ENCODE measurements at regions of chr14 and their contacts with region 1.

Region 1: DNA sequence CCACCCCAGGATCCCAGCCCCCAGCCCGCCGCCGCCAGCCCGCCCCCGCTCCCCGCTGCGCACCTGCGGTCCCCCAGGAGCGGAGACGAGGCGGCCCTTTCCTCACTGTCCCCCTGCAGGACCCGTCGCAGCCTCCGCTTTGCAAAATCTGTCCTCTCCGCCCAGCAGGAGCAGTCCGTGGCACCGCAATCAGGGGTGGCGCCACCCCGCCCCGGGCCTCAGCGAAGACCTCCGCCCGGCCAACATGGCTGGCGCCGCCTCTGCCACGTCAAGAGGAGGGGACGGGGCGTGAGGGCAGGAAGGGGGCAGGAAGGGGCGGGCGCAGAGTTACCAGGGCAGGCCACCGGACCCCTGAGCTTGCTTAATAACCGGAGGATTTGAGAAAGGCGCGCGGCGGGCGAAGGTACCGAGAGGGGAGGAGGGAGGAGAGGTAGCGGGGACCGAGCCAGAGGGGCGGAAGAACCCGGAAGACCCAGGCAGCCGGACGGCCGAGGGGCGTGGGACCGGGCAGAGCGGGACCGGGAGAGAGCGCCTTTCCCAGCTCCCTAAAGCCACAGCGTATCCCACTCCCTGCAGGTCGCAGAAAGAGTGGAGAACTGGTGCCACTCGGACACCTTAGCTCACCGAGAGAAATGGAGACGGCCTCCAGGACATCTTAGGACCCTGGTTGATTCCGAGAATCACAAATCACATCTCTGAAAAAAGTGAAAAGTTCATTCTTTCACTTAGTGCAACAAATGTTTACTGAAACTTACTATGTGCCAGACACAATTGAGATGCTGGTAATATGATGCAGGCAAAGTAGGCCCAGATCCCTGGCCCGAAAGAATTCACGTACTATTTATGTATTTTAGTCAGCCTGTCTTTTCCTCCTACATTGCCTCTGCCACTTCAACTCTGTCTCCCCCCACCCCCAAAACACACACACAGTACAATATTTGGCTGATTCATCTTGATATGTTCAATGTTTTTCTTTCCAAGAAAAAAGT is at the start of gene SEC23A:
- DNase-seq: peak; percentile 94 to 97
- H3K4me3 ChIP-seq: peak within 1 kb of the TSS; percentile 76
- H3K4me3 Mint-ChIP-seq: peak within 1 kb of the TSS; percentile 87
- H3K27ac Mint-ChIP-seq: peak within 1 kb of the TSS; percentile 93
- H3K4me1 ChIP-seq: peaks cover 24% of the 10 kb centered on the region
- H3K4me1 Mint-ChIP-seq: peaks cover 7% of the 10 kb centered on the region
- H3K27me3 ChIP-seq: no peaks in the 10 kb centered on the region
- H3K27me3 Mint-ChIP-seq: no peaks in the 10 kb centered on the region
- CTCF ChIP-seq: no peak
- total RNA-seq, gene SEC23A: 90.2 and 108 TPM in 2 replicates

Region 2: GRCh38 chr14:39005044-39005880 is 98.0 kb before region 1 on chr14:
- CTCF ChIA-PET with region 1: no interaction called
- POLR2A ChIA-PET with region 1: no interaction called
- intact Hi-C with region 1: no loop called
- DNase-seq: no peak
- H3K4me3 ChIP-seq: no peak overlapping the region
- H3K4me3 Mint-ChIP-seq: no peak overlapping the region
- H3K27ac Mint-ChIP-seq: no peak overlapping the region
- H3K4me1 ChIP-seq: peaks cover 10% of the 10 kb centered on the region; the same call in 1 of the 2 replicates
- H3K4me1 Mint-ChIP-seq: peaks cover 6% of the 10 kb centered on the region
- H3K27me3 ChIP-seq: no peaks in the 10 kb centered on the region
- H3K27me3 Mint-ChIP-seq: no peaks in the 10 kb centered on the region
- CTCF ChIP-seq: no peak

Region 3: GRCh38 chr14:39114073-39114838 is 11.0 kb after region 1 on chr14 and contains the start of gene GEMIN2:
- CTCF ChIA-PET with region 1: no interaction called
- POLR2A ChIA-PET with region 1: interaction called, 23 read pairs
- intact Hi-C with region 1: loop called (anchors 1 kb)
- DNase-seq: peak; percentile 91 to 92
- H3K4me3 ChIP-seq: peak within 1 kb of the TSS; percentile 54
- H3K4me3 Mint-ChIP-seq: peak within 1 kb of the TSS; percentile 94
- H3K27ac Mint-ChIP-seq: peak within 1 kb of the TSS; percentile 79
- H3K4me1 ChIP-seq: no peaks in the 10 kb centered on the region
- H3K4me1 Mint-ChIP-seq: peaks cover 7% of the 10 kb centered on the region
- H3K27me3 ChIP-seq: no peaks in the 10 kb centered on the region
- H3K27me3 Mint-ChIP-seq: no peaks in the 10 kb centered on the region
- CTCF ChIP-seq: no peak
- total RNA-seq, gene GEMIN2: 26.3 and 31.4 TPM in 2 replicates

Region 4: DNA sequence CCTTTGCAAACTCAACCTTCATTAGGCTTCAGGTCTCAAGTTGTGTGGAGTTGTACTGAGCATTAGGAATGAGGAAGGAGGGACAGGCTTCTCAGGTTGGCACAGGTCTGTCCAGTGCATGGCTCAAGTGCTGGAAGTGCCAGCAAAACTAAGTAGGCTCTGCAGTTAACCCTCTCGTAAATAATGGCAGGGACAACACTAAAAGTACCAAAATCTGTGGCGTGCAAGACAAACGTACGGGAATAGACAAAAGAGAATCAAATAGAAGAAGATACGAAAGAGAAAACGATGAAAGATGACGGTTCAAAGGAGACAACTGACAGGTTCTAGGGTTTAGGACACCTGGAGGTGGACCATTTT is 66.3 kb after region 1 on chr14:
- CTCF ChIA-PET with region 1: interaction called, 9 read pairs
- POLR2A ChIA-PET with region 1: interaction called, 34 read pairs
- intact Hi-C with region 1: loop called (anchors 1 kb)
- DNase-seq: no peak
- H3K4me3 ChIP-seq: peak overlapping the region; percentile 97
- H3K4me3 Mint-ChIP-seq: peak overlapping the region; percentile 95
- H3K27ac Mint-ChIP-seq: peak overlapping the region; percentile 90
- H3K4me1 ChIP-seq: peaks cover 7% of the 10 kb centered on the region; the same call in 1 of the 2 replicates
- H3K4me1 Mint-ChIP-seq: peaks cover 17% of the 10 kb centered on the region
- H3K27me3 ChIP-seq: no peaks in the 10 kb centered on the region
- H3K27me3 Mint-ChIP-seq: no peaks in the 10 kb centered on the region
- CTCF ChIP-seq: no peak

Region 5: DNA sequence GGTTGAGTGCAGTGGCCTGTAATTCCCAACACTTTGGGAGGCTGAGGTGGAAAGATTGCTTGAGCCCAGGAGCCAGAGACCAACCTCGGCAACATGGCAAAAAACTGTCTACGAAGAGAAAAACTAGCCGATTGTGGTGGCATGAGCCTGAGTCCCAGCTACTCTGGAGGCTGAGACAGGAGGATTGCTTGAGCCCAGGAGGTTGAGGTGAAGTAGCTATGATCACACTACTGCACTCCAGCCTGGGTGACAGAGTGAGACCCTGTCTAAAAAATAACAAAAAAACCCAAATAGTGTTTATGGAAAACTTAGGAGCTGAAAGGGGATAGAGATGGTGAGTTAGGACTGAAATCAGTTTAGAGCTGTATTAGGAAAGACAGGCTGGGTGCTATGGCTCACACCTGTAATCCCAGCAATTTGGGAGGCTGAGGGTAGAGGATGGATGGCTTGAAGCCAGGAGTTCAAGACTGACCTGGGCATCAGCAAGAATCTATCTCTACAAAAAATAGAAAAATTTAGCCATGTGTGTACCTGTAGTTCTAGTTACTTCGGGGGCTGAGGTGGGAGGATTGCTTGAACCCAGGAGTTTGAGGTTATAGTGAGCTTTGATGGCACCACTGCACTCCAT is 81.5 kb after region 1 on chr14:
- CTCF ChIA-PET with region 1: no interaction called
- POLR2A ChIA-PET with region 1: interaction called, 10 read pairs
- intact Hi-C with region 1: no loop called
- DNase-seq: no peak
- H3K4me3 ChIP-seq: no peak overlapping the region
- H3K4me3 Mint-ChIP-seq: no peak overlapping the region
- H3K27ac Mint-ChIP-seq: peak overlapping the region; percentile 14
- H3K4me1 ChIP-seq: no peaks in the 10 kb centered on the region
- H3K4me1 Mint-ChIP-seq: no peaks in the 10 kb centered on the region
- H3K27me3 ChIP-seq: no peaks in the 10 kb centered on the region
- H3K27me3 Mint-ChIP-seq: no peaks in the 10 kb centered on the region
- CTCF ChIP-seq: no peak

Region 6: DNA sequence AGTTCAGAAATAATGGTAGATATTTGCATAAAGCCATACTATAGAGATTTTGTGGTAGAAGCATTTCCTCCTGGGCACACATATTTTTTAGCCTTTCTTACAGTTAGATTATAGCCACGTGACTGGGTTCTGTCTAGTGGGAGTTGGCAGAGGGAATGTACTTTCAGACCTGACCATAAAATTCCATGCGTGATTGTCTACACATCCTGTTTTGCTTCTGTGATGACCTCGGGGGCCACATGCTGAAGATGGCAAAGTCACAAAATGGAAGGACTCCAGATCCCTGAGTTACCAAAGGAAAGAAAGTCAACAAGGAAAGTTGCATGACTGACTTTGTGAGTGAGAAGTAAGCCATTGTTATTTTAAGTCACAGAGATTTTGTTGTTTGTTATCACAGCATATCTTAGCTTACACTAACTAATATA is 115.8 kb after region 1 on chr14:
- CTCF ChIA-PET with region 1: no interaction called
- POLR2A ChIA-PET with region 1: no interaction called
- intact Hi-C with region 1: no loop called
- DNase-seq: no peak
- H3K4me3 ChIP-seq: no peak overlapping the region
- H3K4me3 Mint-ChIP-seq: no peak overlapping the region
- H3K27ac Mint-ChIP-seq: no peak overlapping the region
- H3K4me1 ChIP-seq: peaks cover 7% of the 10 kb centered on the region
- H3K4me1 Mint-ChIP-seq: no peaks in the 10 kb centered on the region
- H3K27me3 ChIP-seq: no peaks in the 10 kb centered on the region
- H3K27me3 Mint-ChIP-seq: no peaks in the 10 kb centered on the region
- CTCF ChIP-seq: no peak

Region 7: DNA sequence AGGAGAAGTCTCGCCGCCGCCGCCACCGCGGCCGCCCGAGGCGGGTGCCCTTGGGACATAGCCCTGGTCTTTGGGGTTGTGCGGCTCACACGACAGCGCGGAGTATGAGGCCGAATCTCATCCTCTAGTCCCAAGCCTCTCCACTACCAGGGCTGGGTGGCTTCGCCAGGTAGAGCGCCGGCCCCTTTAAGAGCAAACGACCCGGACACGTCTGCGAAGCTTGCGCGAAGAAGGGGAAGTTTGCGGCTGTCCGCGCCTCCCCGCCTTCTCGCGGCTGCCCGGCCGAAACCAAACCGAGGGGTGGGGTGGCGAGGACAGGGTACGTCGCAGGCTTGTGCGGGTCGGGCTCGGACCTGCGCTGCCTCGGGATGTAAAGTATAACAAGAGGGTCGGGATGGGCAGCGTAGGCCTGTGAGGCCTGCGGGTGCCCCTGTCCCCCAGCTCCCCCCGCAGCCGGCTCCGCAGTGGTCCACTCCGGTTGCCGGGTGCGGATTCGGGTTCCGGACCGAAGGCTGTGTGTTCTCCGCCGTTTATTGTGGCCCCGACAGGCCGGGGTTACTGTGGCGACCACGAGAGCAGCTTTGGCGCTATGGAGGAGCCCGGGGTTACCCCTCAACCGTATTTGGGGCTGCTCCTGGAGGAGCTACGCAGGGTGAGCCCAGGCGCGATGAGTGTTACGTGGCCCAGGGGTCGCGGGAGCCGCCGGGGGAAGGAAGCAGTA is 163.8 kb after region 1 on chr14:
- CTCF ChIA-PET with region 1: no interaction called
- POLR2A ChIA-PET with region 1: interaction called, 7 read pairs
- intact Hi-C with region 1: loop called (anchors 2 kb)
- DNase-seq: peak; percentile 85 to 86
- H3K4me3 ChIP-seq: peak overlapping the region; percentile 57
- H3K4me3 Mint-ChIP-seq: peak overlapping the region; percentile 95
- H3K27ac Mint-ChIP-seq: peak overlapping the region; percentile 98
- H3K4me1 ChIP-seq: peaks cover 22% of the 10 kb centered on the region
- H3K4me1 Mint-ChIP-seq: peaks cover 13% of the 10 kb centered on the region
- H3K27me3 ChIP-seq: no peaks in the 10 kb centered on the region
- H3K27me3 Mint-ChIP-seq: no peaks in the 10 kb centered on the region
- CTCF ChIP-seq: no peak

Region 8: DNA sequence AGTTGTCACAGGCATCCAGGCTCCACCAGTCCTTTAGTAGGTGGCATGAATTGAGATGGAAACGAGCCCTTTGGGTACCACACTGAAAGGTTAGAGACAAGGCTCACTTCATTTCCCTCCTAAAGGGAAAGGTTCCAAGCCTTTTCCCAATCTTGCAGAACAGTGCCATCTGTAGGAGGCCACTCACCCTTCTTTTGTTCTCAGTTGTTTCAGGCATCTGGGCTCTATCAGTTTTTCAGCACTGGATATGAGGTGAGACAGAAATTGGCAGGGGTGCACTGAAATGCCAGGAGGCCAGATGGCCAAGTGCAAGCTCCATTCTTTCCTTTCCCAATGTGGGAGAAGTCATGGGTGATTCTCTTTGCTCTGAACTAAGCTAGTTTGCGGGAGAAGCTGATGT is 313.8 kb after region 1 on chr14:
- CTCF ChIA-PET with region 1: no interaction called
- POLR2A ChIA-PET with region 1: no interaction called
- intact Hi-C with region 1: loop called (anchors 1 kb)
- DNase-seq: peak in 1 of 2 experiments; percentile 46
- H3K4me3 ChIP-seq: no peak overlapping the region
- H3K4me3 Mint-ChIP-seq: no peak overlapping the region
- H3K27ac Mint-ChIP-seq: no peak overlapping the region
- H3K4me1 ChIP-seq: no peaks in the 10 kb centered on the region
- H3K4me1 Mint-ChIP-seq: no peaks in the 10 kb centered on the region
- H3K27me3 ChIP-seq: no peaks in the 10 kb centered on the region
- H3K27me3 Mint-ChIP-seq: no peaks in the 10 kb centered on the region
- CTCF ChIP-seq: peak in 1 of 2 experiments; percentile 27

Region 9: DNA sequence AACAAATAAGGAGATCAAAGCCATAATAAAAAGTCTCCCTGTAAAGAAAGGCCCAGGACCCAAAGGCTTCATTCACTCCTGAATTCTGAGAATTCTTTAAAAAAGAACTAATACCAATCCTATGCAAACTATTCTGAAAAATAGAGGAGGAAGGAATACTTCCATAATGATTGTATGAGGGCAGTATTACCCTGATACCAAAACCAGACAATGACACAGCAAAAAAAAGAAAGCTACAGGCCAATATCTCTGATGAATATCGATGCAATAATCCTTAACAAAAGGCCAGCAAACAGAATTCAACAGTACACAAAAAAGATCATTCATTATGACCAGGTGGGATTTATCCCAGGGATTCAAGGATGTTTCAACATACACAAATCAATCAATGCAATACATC is 786.8 kb after region 1 on chr14:
- CTCF ChIA-PET with region 1: no interaction called
- POLR2A ChIA-PET with region 1: no interaction called
- intact Hi-C with region 1: no loop called
- DNase-seq: no peak
- H3K4me3 ChIP-seq: no peak overlapping the region
- H3K4me3 Mint-ChIP-seq: no peak overlapping the region
- H3K27ac Mint-ChIP-seq: no peak overlapping the region
- H3K4me1 ChIP-seq: no peaks in the 10 kb centered on the region
- H3K4me1 Mint-ChIP-seq: no peaks in the 10 kb centered on the region
- H3K27me3 ChIP-seq: no peaks in the 10 kb centered on the region
- H3K27me3 Mint-ChIP-seq: no peaks in the 10 kb centered on the region
- CTCF ChIP-seq: no peak